ENCODE measurements at regions of chr14 and their contacts with region 1.

Region 1: DNA sequence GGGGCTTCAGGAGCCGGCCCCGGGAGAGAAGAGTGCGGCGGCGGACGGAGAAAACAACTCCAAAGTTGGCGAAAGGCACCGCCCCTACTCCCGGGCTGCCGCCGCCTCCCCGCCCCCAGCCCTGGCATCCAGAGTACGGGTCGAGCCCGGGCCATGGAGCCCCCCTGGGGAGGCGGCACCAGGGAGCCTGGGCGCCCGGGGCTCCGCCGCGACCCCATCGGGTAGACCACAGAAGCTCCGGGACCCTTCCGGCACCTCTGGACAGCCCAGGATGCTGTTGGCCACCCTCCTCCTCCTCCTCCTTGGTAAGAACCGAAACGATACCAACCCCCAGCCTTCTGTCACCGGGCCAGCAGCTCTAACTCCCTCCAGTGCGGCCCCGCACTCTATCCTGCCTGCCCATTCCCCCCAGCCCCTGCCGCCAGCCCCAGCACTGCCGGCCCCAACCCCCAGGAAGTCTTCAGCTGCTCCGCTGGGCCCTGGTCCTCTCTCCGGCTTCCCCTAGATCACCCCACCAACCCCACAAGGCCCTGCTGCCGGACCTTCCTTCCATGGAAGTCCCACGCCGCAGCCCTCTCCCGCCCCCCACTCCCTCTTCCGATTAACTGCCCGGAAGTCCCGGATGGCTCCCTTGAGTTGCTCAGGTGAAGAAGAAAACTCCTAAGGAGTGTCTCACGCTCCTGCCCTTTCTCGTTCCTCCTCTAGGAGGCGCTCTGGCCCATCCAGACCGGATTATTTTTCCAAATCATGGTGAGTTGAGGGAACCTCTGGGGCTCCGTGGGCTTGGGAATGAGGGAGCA is 693 bp downstream of the LRP10 start:
- DNase-seq: peak; percentile 93
- H3K4me3 ChIP-seq: peak overlapping the region; percentile 77 to 93 (median 87)
- H3K27ac ChIP-seq: peak overlapping the region; percentile 99
- H3K4me1 ChIP-seq: peaks cover 0 to 51% (median 49%) of the 10 kb centered on the region in 4 donors
- H3K27me3 ChIP-seq: no peaks in the 10 kb centered on the region
- CTCF ChIP-seq: peak; percentile 88 to 97 (median 96)
- EP300 ChIP-seq: peak in 1 of 4 donors; percentile 7
- POLR2A ChIP-seq: peak in 1 of 2 donors; percentile 7

Region 2: DNA sequence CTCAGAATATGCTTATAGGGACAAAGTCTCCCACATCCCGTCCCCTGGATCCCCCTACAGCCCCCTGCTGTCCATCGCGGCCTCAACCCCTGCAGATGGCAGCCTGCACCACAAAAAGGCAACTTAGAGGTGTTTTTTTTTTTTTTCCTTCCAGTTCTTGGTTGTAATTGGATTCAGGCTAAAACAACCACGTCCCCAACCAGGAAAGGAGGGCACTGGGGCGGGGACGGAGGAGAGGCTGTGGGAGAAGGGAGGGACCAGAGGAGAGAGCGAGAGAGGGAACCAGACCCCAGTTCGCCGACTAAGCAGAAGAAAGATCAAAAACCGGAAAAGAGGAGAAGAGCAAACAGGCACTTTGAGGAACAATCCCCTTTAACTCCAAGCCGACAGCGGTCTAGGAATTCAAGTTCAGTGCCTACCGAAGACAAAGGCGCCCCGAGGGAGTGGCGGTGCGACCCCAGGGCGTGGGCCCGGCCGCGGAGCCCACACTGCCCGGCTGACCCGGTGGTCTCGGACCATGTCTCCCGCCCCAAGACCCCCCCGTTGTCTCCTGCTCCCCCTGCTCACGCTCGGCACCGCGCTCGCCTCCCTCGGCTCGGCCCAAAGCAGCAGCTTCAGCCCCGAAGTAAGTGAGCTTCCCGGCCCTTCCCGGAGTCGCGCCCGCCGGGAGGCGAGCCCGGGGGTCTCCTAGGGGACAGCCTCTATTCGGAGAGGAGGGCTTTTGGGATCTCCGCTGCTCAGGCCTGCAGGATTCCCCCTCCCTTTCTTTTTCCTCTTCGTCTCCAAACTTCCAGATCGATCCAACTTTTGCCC is 35.7 kb before region 1 on chr14 and contains the start of gene MMP14:
- intact Hi-C with region 1: loop called (anchors 5 kb)
- DNase-seq: peak; percentile 94
- H3K4me3 ChIP-seq: peak within 1 kb of the TSS; percentile 95 to 98 (median 97)
- H3K27ac ChIP-seq: peak within 1 kb of the TSS; percentile 97 to 100 (median 98)
- H3K4me1 ChIP-seq: peaks cover 0 to 43% (median 37%) of the 10 kb centered on the region in 4 donors
- H3K27me3 ChIP-seq: no peaks in the 10 kb centered on the region
- CTCF ChIP-seq: peak; percentile 28 to 53 (median 46)
- EP300 ChIP-seq: no peak
- POLR2A ChIP-seq: peak; percentile 75 to 90
- total RNA-seq, gene MMP14: 86.6 to 140 (median 115) TPM

Region 3: DNA sequence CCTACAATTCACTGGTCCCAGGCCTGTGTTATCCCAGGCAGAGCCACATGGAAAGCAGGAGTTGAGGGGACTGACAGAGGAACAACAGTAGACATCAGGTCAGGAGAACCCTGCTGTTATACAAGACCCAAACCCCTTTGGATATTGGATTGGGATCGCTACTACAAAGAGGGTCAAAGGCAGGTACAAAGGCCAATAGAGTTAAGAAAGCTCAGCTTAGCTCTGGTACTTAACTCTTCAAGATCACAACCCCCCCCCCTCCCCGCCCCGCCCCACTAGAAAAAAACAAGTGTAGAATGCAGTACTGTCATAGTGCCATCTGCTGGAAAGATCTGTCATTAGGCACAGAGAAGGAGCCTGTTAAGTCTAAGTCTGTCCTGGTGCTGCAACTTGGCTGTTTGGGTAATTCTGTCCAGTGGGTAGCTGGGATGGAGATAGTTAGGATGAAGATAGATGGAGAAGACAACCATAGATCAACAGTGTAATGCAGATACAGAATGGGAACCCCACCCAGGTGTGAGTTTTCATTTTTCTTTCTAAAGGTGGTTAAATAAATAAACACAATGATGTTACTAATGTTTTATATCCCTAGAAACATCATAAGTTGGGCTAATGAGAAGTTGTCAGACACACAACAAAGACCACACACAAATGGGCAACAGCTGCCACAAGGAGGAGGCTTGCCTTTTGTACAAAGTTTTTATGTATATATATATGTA is 28.0 kb after region 1 on chr14:
- intact Hi-C with region 1: loop called (anchors 1 kb)
- DNase-seq: no peak
- H3K4me3 ChIP-seq: no peak overlapping the region
- H3K27ac ChIP-seq: peak overlapping the region; percentile 62 to 82 (median 74)
- H3K4me1 ChIP-seq: peaks cover 0 to 36% (median 22%) of the 10 kb centered on the region in 4 donors
- H3K27me3 ChIP-seq: no peaks in the 10 kb centered on the region
- CTCF ChIP-seq: peak in 1 of 4 experiments; percentile 50
- EP300 ChIP-seq: no peak
- POLR2A ChIP-seq: no peak

Region 4: DNA sequence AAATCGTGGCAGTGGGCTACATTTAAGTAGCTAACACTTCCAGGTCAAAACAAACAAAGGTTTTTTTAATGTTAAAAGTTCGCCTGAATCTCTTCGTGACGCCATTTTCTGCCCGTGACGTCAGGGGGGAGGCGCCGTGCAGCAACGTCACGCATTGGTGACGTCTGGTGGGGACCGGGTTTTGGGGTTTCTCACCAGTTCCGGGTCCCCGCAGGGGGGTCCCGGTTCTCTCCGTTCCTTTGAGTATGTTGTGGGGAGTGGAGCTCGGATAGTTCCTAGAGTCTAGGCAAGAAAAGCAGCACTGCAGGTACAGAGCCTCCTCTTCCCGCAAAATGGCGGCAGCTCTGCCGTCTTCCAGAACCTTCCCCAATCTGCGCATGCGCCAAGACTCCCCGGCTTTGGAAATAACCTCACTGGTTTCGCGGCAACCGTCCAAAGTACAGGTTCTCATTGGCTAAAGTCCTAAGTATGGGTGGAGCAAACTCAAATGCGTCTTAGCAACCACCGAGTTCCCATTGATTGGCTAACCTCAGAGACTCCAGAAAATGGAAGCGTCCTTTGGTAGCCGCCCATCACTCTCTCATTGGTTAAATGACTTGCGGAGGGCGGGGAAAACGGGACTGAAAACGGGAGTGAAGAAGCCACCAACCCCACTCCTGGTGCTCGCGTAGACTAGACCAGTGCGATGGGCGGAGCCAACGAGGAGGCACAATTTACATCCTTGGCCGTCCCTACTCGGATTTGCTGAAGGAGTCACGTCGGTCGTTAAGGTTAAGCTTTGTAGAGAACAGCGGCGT is 46.8 kb after region 1 on chr14 and contains the start of gene RBM23:
- intact Hi-C with region 1: loop called (anchors 5 kb)
- DNase-seq: peak; percentile 100
- H3K4me3 ChIP-seq: peak within 1 kb of the TSS; percentile 65 to 70 (median 67)
- H3K27ac ChIP-seq: peak within 1 kb of the TSS; percentile 92 to 97 (median 94)
- H3K4me1 ChIP-seq: peaks cover 0 to 37% (median 35%) of the 10 kb centered on the region in 4 donors
- H3K27me3 ChIP-seq: no peaks in the 10 kb centered on the region
- CTCF ChIP-seq: no peak
- EP300 ChIP-seq: peak in 2 of 4 donors; percentile 59 to 60
- POLR2A ChIP-seq: peak; percentile 64 to 71
- total RNA-seq, gene RBM23: 356 to 5,076 (median 594) TPM

Region 5: GRCh38 chr14:22986508-22987054 is 114.3 kb after region 1 on chr14:
- intact Hi-C with region 1: loop called (anchors 5 kb)
- DNase-seq: peak; percentile 94
- H3K4me3 ChIP-seq: no peak overlapping the region
- H3K27ac ChIP-seq: no peak overlapping the region
- H3K4me1 ChIP-seq: peaks cover 0 to 17% (median 5%) of the 10 kb centered on the region in 4 donors
- H3K27me3 ChIP-seq: peaks cover 0 to 1% (median 0%) of the 10 kb centered on the region in 3 donors
- CTCF ChIP-seq: peak; percentile 67 to 91 (median 90)
- EP300 ChIP-seq: no peak
- POLR2A ChIP-seq: no peak

Region 6: DNA sequence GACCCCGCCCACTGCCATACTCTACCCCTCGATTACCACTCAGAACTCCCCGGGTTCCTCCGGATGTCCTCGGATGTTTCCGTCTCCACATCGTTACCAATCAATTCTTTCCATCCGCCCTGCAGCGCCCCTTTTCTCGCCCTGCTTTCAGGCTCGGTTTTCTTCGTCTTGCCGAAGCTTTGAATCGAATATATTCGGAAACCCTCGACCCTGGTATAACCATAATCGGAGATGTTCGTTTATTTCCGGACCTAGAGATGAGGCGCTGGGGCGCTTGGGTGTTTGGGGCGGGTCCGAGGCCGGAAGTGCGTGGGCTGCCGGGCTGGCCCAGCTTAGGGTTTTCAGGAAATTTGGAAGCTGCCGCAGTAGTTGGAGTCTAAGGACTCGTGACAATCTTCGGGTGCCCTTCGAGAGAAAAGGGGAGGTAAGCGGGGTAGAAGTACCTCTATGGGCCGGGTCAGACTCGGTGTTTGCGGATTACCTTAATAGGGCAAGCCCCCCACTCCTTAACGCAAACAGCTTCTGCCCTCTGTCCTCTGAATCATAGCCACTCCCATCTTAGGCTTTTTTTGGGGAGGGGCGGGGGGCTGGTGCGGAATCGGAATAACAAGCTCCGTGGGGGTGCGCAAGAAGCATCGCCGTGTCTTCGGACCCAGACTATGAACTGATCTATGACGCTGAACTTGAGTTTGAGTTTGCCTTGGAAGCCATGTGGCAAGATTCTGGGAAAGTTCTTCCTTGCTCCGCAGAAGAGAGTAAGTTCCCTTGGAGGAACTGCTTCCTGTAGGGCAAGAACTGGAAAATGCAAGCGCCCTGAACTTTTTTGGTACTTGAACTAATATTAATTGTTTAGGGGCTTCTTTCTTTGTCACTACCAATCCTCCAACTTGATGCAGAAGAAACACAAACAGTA is 223.2 kb after region 1 on chr14 and contains the start of gene C14orf119:
- intact Hi-C with region 1: loop called (anchors 5 kb)
- DNase-seq: peak; percentile 100
- H3K4me3 ChIP-seq: peak within 1 kb of the TSS; percentile 79 to 93 (median 90)
- H3K27ac ChIP-seq: peak within 1 kb of the TSS; percentile 97 to 99 (median 98)
- H3K4me1 ChIP-seq: peaks cover 0 to 49% (median 38%) of the 10 kb centered on the region in 4 donors
- H3K27me3 ChIP-seq: no peaks in the 10 kb centered on the region
- CTCF ChIP-seq: no peak
- EP300 ChIP-seq: peak in 1 of 4 donors; percentile 56
- POLR2A ChIP-seq: peak; percentile 86
- total RNA-seq, gene C14orf119: 22.4 to 38.9 (median 30.1) TPM

Measured in sigmoid colon (tissue), 7 donors.